Caco-2 (cell line): ENCODE measurements at regions of chr10 and their contacts with region 1.

Region 1: GRCh38 chr10:58268870-58269605 is at the start of gene CISD1:
- DNase-seq: peak; percentile 100
- H3K4me3 ChIP-seq: peak within 1 kb of the TSS; percentile 100
- H3K4me3 Mint-ChIP-seq: peak within 1 kb of the TSS; percentile 96
- H3K27ac Mint-ChIP-seq: peak within 1 kb of the TSS; percentile 98
- H3K4me1 ChIP-seq: peaks cover 18% of the 10 kb centered on the region
- H3K4me1 Mint-ChIP-seq: peaks cover 7% of the 10 kb centered on the region
- H3K27me3 ChIP-seq: no peaks in the 10 kb centered on the region
- H3K27me3 Mint-ChIP-seq: no peaks in the 10 kb centered on the region
- CTCF ChIP-seq: no peak
- total RNA-seq, gene CISD1: 98.3 and 99.3 TPM in 2 replicates

Region 2: DNA sequence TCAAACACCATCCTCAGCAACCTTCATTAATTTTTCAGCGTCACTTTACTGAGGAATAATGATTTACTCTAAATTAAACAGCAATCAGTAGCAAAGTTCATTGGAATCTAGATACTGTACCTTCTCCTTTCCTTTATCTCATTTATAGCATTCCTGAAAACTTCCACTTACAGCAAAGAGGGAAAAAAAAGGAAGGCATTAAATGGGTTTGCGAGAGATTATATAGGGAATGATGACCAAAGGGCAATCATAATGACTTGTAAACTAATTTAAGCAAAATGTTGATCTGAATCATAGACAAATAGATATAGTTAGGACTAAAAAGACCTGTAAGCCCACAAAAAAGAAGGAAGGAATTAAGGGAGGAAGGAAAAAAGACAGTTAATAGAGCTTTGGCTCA is 43.4 kb before region 1 on chr10:
- CTCF ChIA-PET with region 1: no interaction called
- POLR2A ChIA-PET with region 1: interaction called, 4 read pairs
- intact Hi-C with region 1: loop called (anchors 1 kb)
- DNase-seq: no peak
- H3K4me3 ChIP-seq: no peak overlapping the region
- H3K4me3 Mint-ChIP-seq: no peak overlapping the region
- H3K27ac Mint-ChIP-seq: peak overlapping the region; percentile 2
- H3K4me1 ChIP-seq: peaks cover 23% of the 10 kb centered on the region
- H3K4me1 Mint-ChIP-seq: peaks cover 17% of the 10 kb centered on the region
- H3K27me3 ChIP-seq: no peaks in the 10 kb centered on the region
- H3K27me3 Mint-ChIP-seq: no peaks in the 10 kb centered on the region
- CTCF ChIP-seq: no peak

Region 3: GRCh38 chr10:58282615-58283014 is 13.6 kb after region 1 on chr10:
- CTCF ChIA-PET with region 1: no interaction called
- POLR2A ChIA-PET with region 1: interaction called, 7 read pairs
- intact Hi-C with region 1: loop called (anchors 1 kb)
- DNase-seq: peak in 1 of 2 experiments; percentile 39
- H3K4me3 ChIP-seq: no peak overlapping the region
- H3K4me3 Mint-ChIP-seq: no peak overlapping the region
- H3K27ac Mint-ChIP-seq: no peak overlapping the region
- H3K4me1 ChIP-seq: peaks cover 11% of the 10 kb centered on the region; the same call in 1 of the 2 replicates
- H3K4me1 Mint-ChIP-seq: peaks cover 16% of the 10 kb centered on the region
- H3K27me3 ChIP-seq: no peaks in the 10 kb centered on the region
- H3K27me3 Mint-ChIP-seq: no peaks in the 10 kb centered on the region
- CTCF ChIP-seq: no peak

Region 4: DNA sequence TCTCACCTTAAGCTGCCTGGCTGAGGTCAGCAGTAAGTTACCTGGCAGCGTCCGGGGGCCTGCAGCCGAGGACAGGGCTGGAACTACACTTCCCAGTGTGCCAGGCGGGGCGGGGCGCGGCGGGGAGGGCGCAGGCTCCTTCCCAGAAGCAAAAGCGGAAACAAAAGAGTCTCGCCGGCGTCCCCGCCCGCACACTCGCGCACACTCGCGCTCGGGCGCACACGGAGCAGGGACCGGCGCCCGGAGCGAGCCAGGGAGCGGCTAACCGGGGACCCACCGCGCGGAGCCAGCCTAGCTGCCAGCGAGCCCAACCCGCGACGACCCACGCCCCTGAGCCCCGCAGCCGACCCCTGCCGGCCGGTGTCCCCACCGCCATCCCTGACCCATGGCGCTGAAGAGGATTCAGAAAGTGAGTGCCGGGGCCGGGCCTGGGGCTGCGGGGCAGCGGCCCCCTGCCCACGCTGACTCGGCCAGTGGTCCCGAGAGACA is 65.8 kb after region 1 on chr10 and contains the start of gene UBE2D1:
- CTCF ChIA-PET with region 1: no interaction called
- POLR2A ChIA-PET with region 1: interaction called, 3 read pairs
- intact Hi-C with region 1: loop called (anchors 1 kb)
- DNase-seq: peak; percentile 95 to 97
- H3K4me3 ChIP-seq: peak within 1 kb of the TSS; percentile 83
- H3K4me3 Mint-ChIP-seq: peak within 1 kb of the TSS; percentile 84
- H3K27ac Mint-ChIP-seq: peak within 1 kb of the TSS; percentile 84
- H3K4me1 ChIP-seq: peaks cover 8% of the 10 kb centered on the region
- H3K4me1 Mint-ChIP-seq: peaks cover 16% of the 10 kb centered on the region
- H3K27me3 ChIP-seq: no peaks in the 10 kb centered on the region; the same call in 1 of the 2 replicates
- H3K27me3 Mint-ChIP-seq: peaks cover 8% of the 10 kb centered on the region
- CTCF ChIP-seq: peak; percentile 45 to 59
- total RNA-seq, gene UBE2D1: 35.1 and 39.7 TPM in 2 replicates

Region 5: DNA sequence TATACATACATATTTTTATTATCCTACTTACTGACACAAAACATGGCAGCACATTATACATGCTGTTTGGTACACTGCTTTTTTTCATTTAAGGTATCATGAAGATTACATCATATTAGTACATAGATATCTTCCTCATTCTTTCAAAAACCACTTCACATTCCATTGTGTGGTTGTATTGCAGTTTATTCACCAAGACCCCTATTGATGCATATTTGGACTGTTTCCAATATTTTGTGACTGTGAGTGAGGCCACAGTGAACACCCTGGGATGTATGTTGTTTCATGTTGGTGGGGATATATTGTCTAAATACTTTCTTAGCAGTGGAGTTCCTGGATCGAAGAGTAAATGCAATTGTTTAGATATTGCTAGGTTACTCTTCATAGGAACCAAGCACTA is 155.1 kb after region 1 on chr10:
- CTCF ChIA-PET with region 1: no interaction called
- POLR2A ChIA-PET with region 1: no interaction called
- intact Hi-C with region 1: no loop called
- DNase-seq: no peak
- H3K4me3 ChIP-seq: no peak overlapping the region
- H3K4me3 Mint-ChIP-seq: no peak overlapping the region
- H3K27ac Mint-ChIP-seq: no peak overlapping the region
- H3K4me1 ChIP-seq: peaks cover 8% of the 10 kb centered on the region; the same call in 1 of the 2 replicates
- H3K4me1 Mint-ChIP-seq: no peaks in the 10 kb centered on the region
- H3K27me3 ChIP-seq: no peaks in the 10 kb centered on the region; the same call in 1 of the 2 replicates
- H3K27me3 Mint-ChIP-seq: no peaks in the 10 kb centered on the region
- CTCF ChIP-seq: no peak

Region 6: DNA sequence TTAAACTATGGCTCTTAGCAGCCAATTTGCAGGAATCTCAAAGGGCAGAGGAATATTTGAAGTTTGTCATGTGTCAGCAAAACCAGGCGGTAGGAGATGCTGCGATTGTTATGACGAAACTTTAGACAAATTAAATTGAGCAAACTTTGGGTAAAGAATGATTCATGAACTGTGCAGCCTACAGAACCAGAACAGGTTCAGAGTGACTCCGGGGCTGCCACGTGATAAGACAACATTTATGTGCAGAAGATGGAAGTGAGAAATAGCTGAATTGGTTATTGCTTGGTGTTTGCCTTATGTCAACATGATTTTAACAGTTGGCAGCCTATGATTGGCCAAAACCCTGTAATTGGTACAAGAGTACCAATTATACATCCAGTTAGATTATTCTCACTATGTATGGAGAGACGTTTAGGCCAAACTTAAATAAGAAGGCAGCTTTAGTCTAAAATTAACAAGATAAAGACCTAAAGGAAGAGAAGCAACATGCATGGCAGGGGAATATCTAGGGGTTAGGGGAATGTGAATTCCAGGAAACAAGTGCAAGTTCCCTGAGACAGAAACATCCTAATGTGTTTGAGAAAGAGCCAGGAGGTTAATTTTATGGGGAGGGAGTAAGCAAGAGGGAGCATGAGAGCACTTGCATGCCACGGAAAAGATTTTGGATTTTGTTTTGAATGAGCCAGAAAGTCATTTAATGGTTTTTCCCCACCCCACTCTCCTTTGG is 1676.8 kb after region 1 on chr10:
- CTCF ChIA-PET with region 1: no interaction called
- POLR2A ChIA-PET with region 1: no interaction called
- intact Hi-C with region 1: no loop called
- DNase-seq: no peak
- H3K4me3 ChIP-seq: no peak overlapping the region
- H3K4me3 Mint-ChIP-seq: no peak overlapping the region
- H3K27ac Mint-ChIP-seq: no peak overlapping the region
- H3K4me1 ChIP-seq: peaks cover 13% of the 10 kb centered on the region
- H3K4me1 Mint-ChIP-seq: peaks cover 21% of the 10 kb centered on the region
- H3K27me3 ChIP-seq: no peaks in the 10 kb centered on the region
- H3K27me3 Mint-ChIP-seq: no peaks in the 10 kb centered on the region
- CTCF ChIP-seq: no peak